ENCODE measurements at regions of chr1 and their contacts with region 1.

Region 1: GRCh38 chr1:1374929-1375662 is at the start of gene AURKAIP1:
- DNase-seq: peak; percentile 95 to 100 (median 98)
- ATAC-seq: peak; percentile 96
- H3K4me3 ChIP-seq: peak within 1 kb of the TSS; percentile 100
- H3K27ac ChIP-seq: peak within 1 kb of the TSS; percentile 97
- H3K4me1 ChIP-seq: peaks cover 16 to 59% of the 10 kb centered on the region in 2 experiments
- H3K27me3 ChIP-seq: no peaks in the 10 kb centered on the region
- CTCF ChIP-seq: peak; percentile 35 to 61 (median 53)
- EP300 ChIP-seq: peak; percentile 67
- POLR2A ChIP-seq: peak; percentile 93
- RAD21 ChIP-seq: peak in 1 of 2 experiments; percentile 18; a peak in 1 of 4 replicates
- polyA plus RNA-seq, gene AURKAIP1: 7.8 to 32.9 TPM

Region 2: GRCh38 chr1:1324521-1325287 is 50.4 kb before region 1 on chr1 and contains the starts of genes CPTP and INTS11:
- CTCF ChIA-PET with region 1: no interaction called
- POLR2A ChIA-PET with region 1: no interaction called
- in situ Hi-C with region 1: no loop called
- intact Hi-C with region 1: loop called (anchors 5 kb)
- DNase-seq: peak; percentile 97 to 99 (median 98)
- ATAC-seq: peak; percentile 92
- H3K4me3 ChIP-seq: peak within 1 kb of the TSS; percentile 99
- H3K27ac ChIP-seq: peak within 1 kb of the TSS; percentile 89
- H3K4me1 ChIP-seq: peaks cover 16 to 90% of the 10 kb centered on the region in 2 experiments
- H3K27me3 ChIP-seq: no peaks in the 10 kb centered on the region
- CTCF ChIP-seq: no peak
- EP300 ChIP-seq: no peak
- POLR2A ChIP-seq: peak; percentile 89
- RAD21 ChIP-seq: 0 out of 4 replicates have a peak, but pooled peaks of 1 of the 2 experiments have one; percentile 3
- polyA plus RNA-seq, gene CPTP: 0.11 to 0.20 TPM
- polyA plus RNA-seq, gene INTS11: 3.6 to 11.8 TPM

Region 3: DNA sequence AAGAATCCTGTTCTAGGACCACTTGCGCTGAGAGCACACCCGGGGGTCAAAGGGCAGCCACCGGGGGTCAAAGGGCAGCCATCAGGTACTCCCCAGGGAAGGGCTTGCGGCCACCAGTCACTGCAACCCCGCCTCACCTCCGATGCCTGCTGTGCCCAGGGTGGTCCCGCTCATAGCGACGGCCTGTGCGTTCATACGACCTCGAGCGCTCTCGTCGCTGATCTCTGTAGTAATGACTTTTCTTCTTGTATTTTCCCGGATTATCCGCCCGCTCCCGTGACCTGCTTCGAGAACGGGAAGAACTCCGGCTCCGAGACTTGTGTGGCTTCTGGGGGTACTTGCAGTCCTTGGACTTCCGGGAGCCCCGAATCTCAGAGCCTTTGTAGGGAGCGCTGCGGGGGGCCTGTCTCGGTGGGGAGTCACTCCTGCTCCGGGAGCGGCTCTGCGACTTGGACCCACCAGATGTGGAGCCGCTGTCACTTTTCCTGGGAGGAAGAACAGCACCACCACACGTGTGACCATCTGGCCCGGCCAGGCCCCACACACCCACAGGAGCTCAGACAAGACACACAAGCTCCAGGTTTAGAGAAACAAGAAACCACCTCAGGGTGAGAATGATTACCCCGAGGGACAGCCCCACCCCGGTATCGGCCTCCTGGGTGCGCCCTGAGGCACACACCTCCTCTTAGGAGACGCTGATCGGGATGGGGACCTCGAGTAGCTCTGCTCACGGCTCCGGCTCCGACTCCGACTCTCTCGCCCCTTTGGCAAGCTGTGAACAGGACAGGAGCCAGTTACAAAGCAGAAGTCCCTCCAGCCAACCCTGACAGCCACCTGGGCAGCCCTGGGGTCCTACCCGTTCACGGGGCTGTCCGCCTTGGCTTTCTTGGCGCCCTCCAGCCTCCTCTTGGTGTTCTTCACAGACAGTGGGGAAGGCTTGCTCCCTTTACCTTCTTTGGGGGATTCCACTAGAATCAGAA is 12.3 kb after region 1 on chr1:
- CTCF ChIA-PET with region 1: no interaction called
- POLR2A ChIA-PET with region 1: interaction called, 54 read pairs
- in situ Hi-C with region 1: no loop called
- intact Hi-C with region 1: no loop called
- DNase-seq: peak in 1 of 4 experiments; percentile 42
- ATAC-seq: no peak
- H3K4me3 ChIP-seq: no peak overlapping the region
- H3K27ac ChIP-seq: no peak overlapping the region
- H3K4me1 ChIP-seq: peaks cover 6 to 12% of the 10 kb centered on the region in 2 experiments; a peak in 4 of 5 replicates
- H3K27me3 ChIP-seq: no peaks in the 10 kb centered on the region
- CTCF ChIP-seq: no peak
- EP300 ChIP-seq: no peak
- POLR2A ChIP-seq: no peak
- RAD21 ChIP-seq: no peak

Region 4: DNA sequence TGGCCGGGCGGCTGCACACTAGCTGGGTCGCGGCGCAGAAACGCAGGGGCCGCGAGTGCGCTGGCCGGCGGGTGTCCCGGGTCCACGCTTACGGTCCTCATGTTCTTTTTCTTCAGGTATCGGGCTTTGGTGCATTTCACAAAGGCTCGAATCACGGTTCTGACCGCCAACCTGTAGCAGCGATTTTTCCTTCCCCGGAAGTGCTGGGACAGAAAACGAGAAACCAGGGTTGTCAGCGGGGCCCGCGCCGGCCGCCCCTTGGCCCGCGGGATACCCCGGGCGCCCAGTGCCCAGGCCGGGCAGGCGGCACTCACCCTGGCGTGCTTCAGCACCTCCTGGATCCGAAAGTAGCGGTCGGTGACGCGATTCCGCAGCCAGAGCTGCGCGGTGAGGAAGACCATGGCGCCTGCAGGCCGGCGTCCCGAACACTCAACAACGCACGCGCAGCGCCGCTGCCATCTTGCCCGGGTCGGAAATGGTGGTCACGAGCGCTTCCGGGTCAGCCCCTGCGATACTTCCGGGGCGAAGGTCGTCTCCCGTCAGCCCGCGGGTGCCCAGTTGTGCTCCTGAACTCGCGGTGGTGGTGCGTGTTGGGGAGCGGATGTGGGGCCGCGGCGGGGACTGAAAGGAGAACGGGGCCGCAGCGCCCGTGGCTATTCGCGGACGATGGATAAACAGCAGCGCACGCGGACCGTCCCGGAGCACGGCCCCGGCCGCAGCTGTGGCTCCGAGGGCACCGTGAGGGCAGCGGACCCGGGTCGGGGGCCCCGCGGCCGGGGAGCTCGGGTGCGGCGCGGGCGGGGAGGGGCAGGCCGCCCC is 31.9 kb after region 1 on chr1 and contains the start of gene MRPL20:
- CTCF ChIA-PET with region 1: no interaction called
- POLR2A ChIA-PET with region 1: interaction called, 18 read pairs
- in situ Hi-C with region 1: no loop called
- intact Hi-C with region 1: no loop called
- DNase-seq: peak; percentile 88 to 99 (median 93)
- ATAC-seq: peak; percentile 96
- H3K4me3 ChIP-seq: peak within 1 kb of the TSS; percentile 100
- H3K27ac ChIP-seq: peak within 1 kb of the TSS; percentile 89
- H3K4me1 ChIP-seq: peaks cover 14 to 50% of the 10 kb centered on the region in 2 experiments
- H3K27me3 ChIP-seq: no peaks in the 10 kb centered on the region
- CTCF ChIP-seq: 0 out of 6 replicates have a peak, but pooled peaks of 1 of the 3 experiments have one; percentile 9
- EP300 ChIP-seq: no peak; the same call in 1 of the 2 replicates
- POLR2A ChIP-seq: peak; percentile 98
- RAD21 ChIP-seq: peak; percentile 1 to 22; a peak in 1 of 4 replicates
- polyA plus RNA-seq, gene MRPL20: 570 to 671 TPM

Measured in K562 (cell line).